Activated naive CD4-positive, alpha-beta T cell treated with anti-CD3 and anti-CD28 coated beads for 36 hours (primary cell): ENCODE measurements at regions of chr16 and their contacts with region 1.

Region 1: GRCh38 chr16:77722309-77723107 is at the start of gene NUDT7:
- DNase-seq: peak; percentile 99
- H3K4me3 Mint-ChIP-seq: peak within 1 kb of the TSS; percentile 81
- H3K27ac Mint-ChIP-seq: peak within 1 kb of the TSS; percentile 75
- H3K4me1 Mint-ChIP-seq: peaks cover 8% of the 10 kb centered on the region
- H3K27me3 Mint-ChIP-seq: no peaks in the 10 kb centered on the region
- total RNA-seq, gene NUDT7: 9.4 to 9.8 TPM

Region 2: GRCh38 chr16:77211880-77212740 is 510.4 kb before region 1 on chr16:
- CTCF ChIA-PET with region 1: no interaction called
- intact Hi-C with region 1: loop called (anchors 1 kb)
- DNase-seq: peak; percentile 81
- H3K4me3 Mint-ChIP-seq: peak overlapping the region; percentile 77
- H3K27ac Mint-ChIP-seq: no peak overlapping the region
- H3K4me1 Mint-ChIP-seq: peaks cover 8% of the 10 kb centered on the region
- H3K27me3 Mint-ChIP-seq: no peaks in the 10 kb centered on the region

Region 3: DNA sequence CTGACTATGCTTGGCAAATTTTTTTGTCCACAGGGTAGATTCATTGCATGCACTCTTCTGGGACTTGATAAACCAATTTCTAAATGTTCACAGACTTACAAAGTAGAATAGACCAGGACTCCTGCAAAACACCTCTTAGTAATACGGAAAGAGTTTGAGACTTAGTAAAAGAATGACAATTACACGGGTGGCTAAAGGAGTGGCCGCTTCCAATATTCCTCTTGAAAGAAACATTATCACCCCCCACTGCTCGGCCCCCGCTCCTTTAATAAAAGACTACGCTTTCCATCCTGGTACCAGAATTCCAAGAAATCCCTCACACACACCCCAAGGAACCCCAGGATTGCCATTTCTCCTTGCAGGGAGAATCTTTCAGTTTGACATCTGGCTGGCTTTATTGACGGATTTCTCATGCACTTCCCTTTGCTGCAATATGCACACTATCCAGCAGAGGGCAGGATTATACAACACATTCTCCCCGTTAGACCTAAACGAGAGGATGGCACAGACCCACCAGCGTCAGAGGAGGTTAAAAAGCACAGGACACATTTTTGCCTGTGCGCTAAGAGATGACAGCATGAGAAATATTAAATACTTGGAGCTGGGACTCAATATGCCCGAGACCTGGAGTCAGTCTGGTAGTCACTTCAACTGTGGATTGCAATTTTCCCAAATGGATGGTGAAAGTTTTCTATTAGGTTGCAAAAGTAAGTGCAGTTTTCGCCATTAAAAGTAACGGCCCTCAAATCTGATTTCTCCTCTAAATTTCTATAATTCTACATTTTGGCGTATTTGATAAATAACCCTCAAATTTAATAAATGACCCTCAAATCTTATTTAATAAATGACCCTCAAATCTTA is 46.8 kb before region 1 on chr16:
- CTCF ChIA-PET with region 1: no interaction called
- intact Hi-C with region 1: loop called (anchors 5 kb)
- DNase-seq: peak; percentile 79
- H3K4me3 Mint-ChIP-seq: no peak overlapping the region
- H3K27ac Mint-ChIP-seq: no peak overlapping the region
- H3K4me1 Mint-ChIP-seq: no peaks in the 10 kb centered on the region
- H3K27me3 Mint-ChIP-seq: peaks cover 4% of the 10 kb centered on the region

Region 4: GRCh38 chr16:78002915-78003538 is 280.5 kb after region 1 on chr16:
- CTCF ChIA-PET with region 1: interaction called, 6 read pairs
- intact Hi-C with region 1: loop called (anchors 5 kb)
- DNase-seq: peak; percentile 89
- H3K4me3 Mint-ChIP-seq: no peak overlapping the region
- H3K27ac Mint-ChIP-seq: no peak overlapping the region
- H3K4me1 Mint-ChIP-seq: no peaks in the 10 kb centered on the region
- H3K27me3 Mint-ChIP-seq: peaks cover 9% of the 10 kb centered on the region